Sigmoid colon (tissue), 7 donors: ENCODE measurements at regions of chr20 and their contacts with region 1.

Region 1: GRCh38 chr20:34312544-34313217 is 9.5 kb upstream of the AHCY start:
- DNase-seq: peak; percentile 91
- H3K4me3 ChIP-seq: peak overlapping the region in 2 of 4 donors; percentile 7 to 16
- H3K27ac ChIP-seq: no peak overlapping the region
- H3K4me1 ChIP-seq: peaks cover 0 to 13% (median 8%) of the 10 kb centered on the region in 4 donors
- H3K27me3 ChIP-seq: peaks cover 5 to 18% (median 13%) of the 10 kb centered on the region in 3 donors
- CTCF ChIP-seq: peak; percentile 99 to 100 (median 99)
- EP300 ChIP-seq: no peak
- POLR2A ChIP-seq: no peak

Region 2: DNA sequence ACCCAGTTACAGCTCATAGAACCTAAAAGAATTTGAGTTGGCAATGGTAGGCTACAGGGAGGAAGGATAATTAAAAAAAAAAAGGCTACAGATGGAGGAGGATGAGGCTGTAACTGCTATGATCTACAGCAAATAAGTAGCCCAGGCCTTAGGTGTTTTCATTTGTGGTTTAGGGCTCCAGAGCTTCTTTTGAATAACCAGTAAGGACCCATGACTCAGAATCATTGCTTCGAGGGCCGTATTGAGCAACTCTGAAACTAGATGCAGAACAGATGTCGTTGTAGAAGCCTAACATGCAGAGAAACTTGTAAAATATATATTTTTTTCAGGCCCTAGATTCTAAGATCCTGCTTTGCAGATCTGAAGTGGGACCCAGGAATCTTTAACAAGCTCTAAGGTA is 90.5 kb before region 1 on chr20:
- intact Hi-C with region 1: no loop called
- DNase-seq: no peak
- H3K4me3 ChIP-seq: no peak overlapping the region
- H3K27ac ChIP-seq: peak overlapping the region in 1 of 4 donors; percentile 5
- H3K4me1 ChIP-seq: no peaks in the 10 kb centered on the region
- H3K27me3 ChIP-seq: no peaks in the 10 kb centered on the region
- CTCF ChIP-seq: no peak
- EP300 ChIP-seq: no peak
- POLR2A ChIP-seq: no peak

Region 3: GRCh38 chr20:34363062-34363464 is 50.4 kb after region 1 on chr20 and contains the start of gene ITCH:
- intact Hi-C with region 1: no loop called
- DNase-seq: peak; percentile 98
- H3K4me3 ChIP-seq: peak within 1 kb of the TSS; percentile 77 to 97 (median 82)
- H3K27ac ChIP-seq: peak within 1 kb of the TSS; percentile 89 to 95 (median 91)
- H3K4me1 ChIP-seq: peaks cover 0 to 46% (median 39%) of the 10 kb centered on the region in 4 donors
- H3K27me3 ChIP-seq: no peaks in the 10 kb centered on the region
- CTCF ChIP-seq: no peak
- EP300 ChIP-seq: no peak
- POLR2A ChIP-seq: peak; percentile 93
- total RNA-seq, gene ITCH: 50.2 to 60.6 (median 55.2) TPM

Region 4: DNA sequence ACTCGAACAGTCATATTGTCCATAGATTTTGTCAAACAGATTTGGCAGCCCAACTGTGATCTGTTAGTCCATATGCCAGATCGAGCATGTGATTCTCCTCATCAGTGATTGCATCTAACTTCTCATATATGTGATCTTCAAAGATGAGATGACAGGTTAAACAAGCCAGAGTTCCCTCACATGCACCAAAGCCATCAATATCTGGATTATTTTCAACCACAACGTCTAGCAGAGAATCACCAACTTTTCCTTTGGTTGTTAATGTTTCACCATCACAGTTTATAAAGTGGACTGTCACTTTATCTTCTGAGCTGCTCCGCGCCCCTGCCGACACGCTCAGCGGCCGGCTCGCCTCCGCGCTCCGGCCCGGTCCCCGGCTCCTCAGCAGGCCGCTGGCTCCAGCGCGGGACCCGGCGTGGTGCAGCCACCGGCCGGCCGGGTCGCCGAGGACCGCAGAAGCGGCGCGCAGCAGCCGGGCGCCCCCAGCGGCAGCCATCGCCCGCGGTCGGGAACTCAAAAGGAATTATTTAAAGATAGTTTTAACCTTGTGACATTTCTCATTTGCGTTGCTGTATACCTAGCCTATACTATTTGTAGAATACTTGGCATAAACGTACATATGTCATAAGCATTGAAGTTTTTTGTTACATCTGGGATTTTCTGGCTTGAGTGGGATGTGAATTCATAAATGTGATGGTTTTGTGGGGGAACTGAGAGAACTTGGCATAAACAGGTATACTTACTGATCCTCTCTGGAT is 163.5 kb after region 1 on chr20:
- intact Hi-C with region 1: loop called (anchors 2 kb)
- DNase-seq: no peak
- H3K4me3 ChIP-seq: no peak overlapping the region
- H3K27ac ChIP-seq: peak overlapping the region in 2 of 4 donors; percentile 36 to 48
- H3K4me1 ChIP-seq: peaks cover 0 to 19% (median 9%) of the 10 kb centered on the region in 4 donors
- H3K27me3 ChIP-seq: no peaks in the 10 kb centered on the region
- CTCF ChIP-seq: peak in 3 of 4 experiments; percentile 9 to 63 (median 40)
- EP300 ChIP-seq: no peak
- POLR2A ChIP-seq: no peak

Region 5: GRCh38 chr20:34522969-34523871 is 210.5 kb after region 1 on chr20:
- intact Hi-C with region 1: loop called (anchors 2 kb)
- DNase-seq: no peak
- H3K4me3 ChIP-seq: no peak overlapping the region
- H3K27ac ChIP-seq: peak overlapping the region; percentile 75 to 86 (median 82)
- H3K4me1 ChIP-seq: peaks cover 0 to 79% (median 57%) of the 10 kb centered on the region in 4 donors
- H3K27me3 ChIP-seq: no peaks in the 10 kb centered on the region
- CTCF ChIP-seq: peak in 3 of 4 experiments; percentile 41 to 43 (median 41)
- EP300 ChIP-seq: no peak
- POLR2A ChIP-seq: no peak

Region 6: GRCh38 chr20:34768096-34768495 is 455.4 kb after region 1 on chr20:
- intact Hi-C with region 1: loop called (anchors 2 kb)
- DNase-seq: no peak
- H3K4me3 ChIP-seq: no peak overlapping the region
- H3K27ac ChIP-seq: no peak overlapping the region
- H3K4me1 ChIP-seq: peaks cover 0 to 3% (median 0%) of the 10 kb centered on the region in 4 donors
- H3K27me3 ChIP-seq: no peaks in the 10 kb centered on the region
- CTCF ChIP-seq: no peak
- EP300 ChIP-seq: no peak
- POLR2A ChIP-seq: no peak